Endothelial cell of umbilical vein (primary cell): ENCODE measurements at regions of chr5 and their contacts with region 1.

Region 1: DNA sequence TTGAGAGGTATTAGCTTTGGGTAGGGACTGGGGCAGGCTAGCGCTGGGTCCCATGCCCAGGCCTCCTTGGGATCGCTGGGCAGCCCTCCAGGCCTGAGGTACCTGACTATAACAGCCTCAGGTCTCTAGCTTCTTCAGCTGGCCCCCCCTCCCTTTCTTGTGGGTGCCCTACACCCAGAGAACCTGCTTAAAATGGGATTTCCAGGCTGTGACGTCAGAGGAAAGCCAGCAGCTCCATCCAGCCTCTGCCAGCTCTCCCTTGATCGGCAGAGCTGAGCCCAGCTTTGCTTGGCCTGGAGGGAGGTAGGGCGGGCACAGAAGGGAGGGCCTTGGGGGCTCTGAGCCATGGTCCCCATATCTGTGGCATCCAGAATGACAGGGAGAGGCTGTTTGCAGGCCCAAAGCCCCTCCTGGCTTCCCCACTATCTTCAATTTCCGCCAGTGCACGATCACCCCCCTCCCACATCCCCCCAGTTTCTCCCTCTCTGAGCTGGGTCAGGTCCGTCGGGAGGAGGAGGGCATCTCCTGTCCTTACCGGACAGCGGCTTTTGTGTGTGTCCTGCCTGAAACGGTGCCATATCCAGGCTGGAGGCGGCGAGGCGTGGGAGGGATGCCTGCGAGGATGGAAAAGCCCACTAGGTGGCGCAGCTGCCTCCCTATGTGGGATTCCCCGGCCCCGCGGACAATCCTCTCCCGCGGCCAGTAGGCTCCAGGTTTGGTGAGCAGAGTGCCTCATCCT is 10.8 kb downstream of the REEP2 start:
- DNase-seq: peak; percentile 80
- H3K4me3 ChIP-seq: no peak overlapping the region
- H3K27ac ChIP-seq: no peak overlapping the region
- H3K4me1 ChIP-seq: no peaks in the 10 kb centered on the region
- H3K27me3 ChIP-seq: no peaks in the 10 kb centered on the region
- CTCF ChIP-seq: peak; percentile 95 to 98
- POLR2A ChIP-seq: no peak

Region 2: GRCh38 chr5:138418444-138418843 is 31.2 kb before region 1 on chr5:
- CTCF ChIA-PET with region 1: no interaction called
- POLR2A ChIA-PET with region 1: no interaction called
- dilution Hi-C with region 1: no loop called
- intact Hi-C with region 1: no loop called
- DNase-seq: no peak
- H3K4me3 ChIP-seq: no peak overlapping the region
- H3K27ac ChIP-seq: no peak overlapping the region
- H3K4me1 ChIP-seq: no peaks in the 10 kb centered on the region
- H3K27me3 ChIP-seq: no peaks in the 10 kb centered on the region
- CTCF ChIP-seq: no peak
- POLR2A ChIP-seq: no peak

Region 3: GRCh38 chr5:138464008-138464387 is 14.3 kb after region 1 on chr5:
- CTCF ChIA-PET with region 1: interaction called, 22 read pairs
- POLR2A ChIA-PET with region 1: no interaction called
- dilution Hi-C with region 1: no loop called
- intact Hi-C with region 1: loop called (anchors 1 kb)
- DNase-seq: peak; percentile 96
- H3K4me3 ChIP-seq: peak overlapping the region; percentile 62 to 84 (median 69)
- H3K27ac ChIP-seq: peak overlapping the region; percentile 90
- H3K4me1 ChIP-seq: peaks cover 16% of the 10 kb centered on the region
- H3K27me3 ChIP-seq: no peaks in the 10 kb centered on the region
- CTCF ChIP-seq: peak; percentile 85 to 96
- POLR2A ChIP-seq: peak; percentile 68

Region 4: GRCh38 chr5:138498376-138498775 is 48.7 kb after region 1 on chr5:
- CTCF ChIA-PET with region 1: interaction called, 207 read pairs
- POLR2A ChIA-PET with region 1: no interaction called
- dilution Hi-C with region 1: no loop called
- intact Hi-C with region 1: loop called (anchors 1 kb)
- DNase-seq: peak; percentile 21
- H3K4me3 ChIP-seq: no peak overlapping the region
- H3K27ac ChIP-seq: no peak overlapping the region
- H3K4me1 ChIP-seq: no peaks in the 10 kb centered on the region
- H3K27me3 ChIP-seq: no peaks in the 10 kb centered on the region
- CTCF ChIP-seq: no peak
- POLR2A ChIP-seq: no peak

Region 5: DNA sequence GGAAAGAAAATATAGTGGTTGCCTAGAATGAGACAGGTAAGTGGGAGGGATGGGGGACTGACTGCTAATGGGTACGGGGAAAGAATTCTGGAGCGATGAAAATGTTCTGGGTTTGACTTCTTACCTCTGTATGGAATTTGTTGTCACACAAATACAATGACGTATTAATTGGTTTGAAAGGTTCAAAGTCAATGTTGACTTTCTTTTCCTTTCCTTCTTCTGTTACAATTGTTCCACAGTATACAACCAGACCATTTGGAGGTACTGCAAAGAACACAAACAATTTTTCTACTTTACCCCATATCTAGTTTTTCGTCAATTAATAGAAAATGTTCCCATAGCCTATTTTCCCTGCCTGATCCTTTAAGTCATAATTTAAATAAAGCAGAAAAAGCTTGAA is 67.8 kb after region 1 on chr5:
- CTCF ChIA-PET with region 1: no interaction called
- POLR2A ChIA-PET with region 1: no interaction called
- dilution Hi-C with region 1: no loop called
- intact Hi-C with region 1: no loop called
- DNase-seq: no peak
- H3K4me3 ChIP-seq: no peak overlapping the region
- H3K27ac ChIP-seq: no peak overlapping the region
- H3K4me1 ChIP-seq: peaks cover 3% of the 10 kb centered on the region
- H3K27me3 ChIP-seq: no peaks in the 10 kb centered on the region
- CTCF ChIP-seq: no peak
- POLR2A ChIP-seq: no peak

Region 6: DNA sequence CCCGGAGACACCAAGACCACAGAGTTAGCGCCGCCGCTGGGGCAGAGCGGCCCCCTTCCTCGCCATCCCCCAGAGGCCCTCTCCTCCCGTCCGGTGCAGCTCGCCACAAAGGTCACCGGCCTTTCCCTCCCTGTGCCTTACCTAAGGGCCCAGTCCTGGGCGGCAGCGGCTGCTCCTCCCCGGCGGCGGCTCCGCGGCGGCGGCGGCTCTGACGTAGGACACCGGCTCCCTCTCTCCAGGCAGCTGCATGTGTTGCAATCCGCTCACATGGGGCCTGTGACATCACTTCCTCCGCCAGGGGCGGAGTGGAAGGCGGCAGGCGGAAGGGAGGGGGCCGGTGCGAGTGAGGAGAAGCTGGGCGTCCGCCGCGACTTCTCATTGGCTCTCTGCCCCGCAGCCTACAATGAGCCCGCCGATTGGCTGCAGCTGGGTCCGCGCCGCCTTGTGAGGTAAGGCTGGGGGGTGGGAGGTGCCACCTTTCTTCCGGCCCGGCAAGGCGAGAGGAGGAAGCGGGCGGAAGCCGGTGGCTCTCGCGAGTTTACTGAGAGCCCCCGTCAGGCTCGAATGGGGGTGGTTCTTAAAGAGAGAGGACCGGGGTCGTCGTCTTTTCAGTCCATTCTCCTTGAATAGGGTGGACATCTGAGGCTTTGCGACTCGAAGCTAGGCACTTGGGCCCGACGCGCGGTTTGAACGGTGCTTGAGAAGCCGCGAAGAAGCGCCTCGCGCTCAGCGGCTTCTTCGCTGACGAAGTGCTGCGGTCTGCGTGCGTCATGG is 93.5 kb after region 1 on chr5 and contains the start of gene ETF1:
- CTCF ChIA-PET with region 1: interaction called, 15 read pairs
- POLR2A ChIA-PET with region 1: no interaction called
- dilution Hi-C with region 1: no loop called
- intact Hi-C with region 1: loop called (anchors 1 kb)
- DNase-seq: peak; percentile 100
- H3K4me3 ChIP-seq: peak within 1 kb of the TSS; percentile 79 to 95 (median 82)
- H3K27ac ChIP-seq: peak within 1 kb of the TSS; percentile 100
- H3K4me1 ChIP-seq: peaks cover 33% of the 10 kb centered on the region
- H3K27me3 ChIP-seq: no peaks in the 10 kb centered on the region
- CTCF ChIP-seq: no peak
- POLR2A ChIP-seq: no peak
- total RNA-seq, gene ETF1: 103 and 114 TPM in 2 replicates